Activated CD4-positive, alpha-beta memory T cell treated with anti-CD3 and anti-CD28 coated beads for 36 hours (primary cell): ENCODE measurements at regions of chr5 and their contacts with region 1.

Region 1: GRCh38 chr5:143679777-143680176 is 132.2 kb upstream of the HMHB1 start:
- DNase-seq: no peak
- H3K4me3 Mint-ChIP-seq: no peak overlapping the region
- H3K27ac Mint-ChIP-seq: no peak overlapping the region
- H3K4me1 Mint-ChIP-seq: peaks cover 23% of the 10 kb centered on the region
- H3K27me3 Mint-ChIP-seq: peaks cover under 1% of the 10 kb centered on the region

Region 2: DNA sequence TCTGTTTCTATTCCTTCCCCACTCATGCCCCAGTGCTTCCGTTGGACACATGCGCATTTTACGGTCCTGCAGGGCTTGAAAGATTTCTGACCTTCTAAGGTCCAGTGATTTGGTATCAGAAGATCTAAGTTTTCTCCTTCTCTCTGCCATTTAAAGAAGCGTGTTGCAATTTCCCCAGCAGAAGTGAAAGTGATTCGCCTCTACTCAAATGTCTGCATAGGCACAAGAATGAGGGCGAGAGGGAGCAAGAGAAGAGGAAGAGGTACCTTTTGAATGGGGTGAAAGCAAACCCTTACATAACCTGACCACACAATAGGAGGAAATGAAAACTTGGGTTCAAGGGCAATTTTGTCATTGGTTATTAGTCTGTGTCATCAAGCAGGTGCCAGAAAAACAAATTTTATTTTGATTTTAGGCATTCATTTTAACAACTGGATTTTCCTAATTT is 244.5 kb before region 1 on chr5:
- CTCF ChIA-PET with region 1: no interaction called
- POLR2A ChIA-PET with region 1: no interaction called
- intact Hi-C with region 1: loop called (anchors 1 kb)
- DNase-seq: peak; percentile 51
- H3K4me3 Mint-ChIP-seq: peak overlapping the region; percentile 81
- H3K27ac Mint-ChIP-seq: peak overlapping the region; percentile 87
- H3K4me1 Mint-ChIP-seq: peaks cover 68% of the 10 kb centered on the region
- H3K27me3 Mint-ChIP-seq: no peaks in the 10 kb centered on the region

Region 3: DNA sequence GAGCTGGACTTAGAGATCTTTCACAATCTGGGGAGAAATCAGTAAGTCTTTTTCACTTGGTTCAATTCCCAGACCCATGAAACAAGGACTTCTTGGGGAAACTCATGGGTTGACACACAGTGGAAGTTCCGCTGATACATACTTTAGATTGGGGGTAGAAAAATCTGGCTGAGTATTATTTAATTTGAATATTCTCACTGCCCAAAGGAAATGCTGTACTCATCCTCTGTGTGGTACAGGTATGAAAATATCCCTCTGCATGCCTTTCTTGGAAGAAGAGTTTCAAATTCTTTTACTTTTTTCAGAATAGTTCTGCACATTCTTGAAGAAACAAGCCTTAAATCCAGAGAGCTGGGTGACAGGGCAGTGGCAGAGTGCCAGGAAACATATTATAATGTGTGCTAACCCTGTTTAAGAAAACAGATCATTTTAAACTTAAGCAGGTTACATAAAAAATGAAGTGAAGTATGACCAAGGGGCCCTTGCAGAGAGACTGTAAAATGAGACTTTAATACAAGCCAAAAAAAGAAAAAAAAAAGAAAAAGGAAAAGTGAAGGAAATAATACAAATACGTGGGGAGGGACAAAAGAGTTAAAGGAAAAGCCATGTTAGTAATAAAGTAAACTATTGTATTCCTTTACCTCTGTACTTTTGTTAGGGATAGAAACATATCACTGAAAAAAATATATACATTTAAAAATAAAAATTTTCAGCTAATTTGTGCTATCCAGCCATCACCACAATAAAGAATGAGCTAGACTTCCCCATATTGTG is 102.9 kb before region 1 on chr5:
- CTCF ChIA-PET with region 1: no interaction called
- POLR2A ChIA-PET with region 1: no interaction called
- intact Hi-C with region 1: no loop called
- DNase-seq: no peak
- H3K4me3 Mint-ChIP-seq: no peak overlapping the region
- H3K27ac Mint-ChIP-seq: no peak overlapping the region
- H3K4me1 Mint-ChIP-seq: peaks cover 3% of the 10 kb centered on the region
- H3K27me3 Mint-ChIP-seq: no peaks in the 10 kb centered on the region

Region 4: DNA sequence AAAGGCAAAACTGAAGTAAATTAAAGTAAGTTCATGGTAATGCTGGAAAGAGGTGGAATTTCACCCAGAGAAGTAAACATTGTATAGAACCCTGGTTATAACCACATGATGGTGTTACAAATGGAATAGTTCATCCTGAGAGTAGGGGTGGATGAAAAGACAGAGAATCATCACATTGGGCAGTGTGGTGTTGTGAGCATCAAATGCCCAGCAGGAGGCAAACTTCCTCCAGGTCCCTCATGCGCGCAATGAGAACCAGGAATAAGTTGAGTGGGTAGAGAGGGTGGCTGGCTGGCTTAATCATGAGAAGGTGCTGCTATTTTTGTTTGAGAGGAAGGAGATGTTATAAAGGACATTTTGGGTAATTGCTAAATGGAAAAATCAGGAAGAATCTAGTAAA is 31.1 kb before region 1 on chr5:
- CTCF ChIA-PET with region 1: interaction called, 3 read pairs
- POLR2A ChIA-PET with region 1: no interaction called
- intact Hi-C with region 1: loop called (anchors 1 kb)
- DNase-seq: peak; percentile 21
- H3K4me3 Mint-ChIP-seq: no peak overlapping the region
- H3K27ac Mint-ChIP-seq: no peak overlapping the region
- H3K4me1 Mint-ChIP-seq: peaks cover 18% of the 10 kb centered on the region
- H3K27me3 Mint-ChIP-seq: peaks cover 3% of the 10 kb centered on the region

Region 5: DNA sequence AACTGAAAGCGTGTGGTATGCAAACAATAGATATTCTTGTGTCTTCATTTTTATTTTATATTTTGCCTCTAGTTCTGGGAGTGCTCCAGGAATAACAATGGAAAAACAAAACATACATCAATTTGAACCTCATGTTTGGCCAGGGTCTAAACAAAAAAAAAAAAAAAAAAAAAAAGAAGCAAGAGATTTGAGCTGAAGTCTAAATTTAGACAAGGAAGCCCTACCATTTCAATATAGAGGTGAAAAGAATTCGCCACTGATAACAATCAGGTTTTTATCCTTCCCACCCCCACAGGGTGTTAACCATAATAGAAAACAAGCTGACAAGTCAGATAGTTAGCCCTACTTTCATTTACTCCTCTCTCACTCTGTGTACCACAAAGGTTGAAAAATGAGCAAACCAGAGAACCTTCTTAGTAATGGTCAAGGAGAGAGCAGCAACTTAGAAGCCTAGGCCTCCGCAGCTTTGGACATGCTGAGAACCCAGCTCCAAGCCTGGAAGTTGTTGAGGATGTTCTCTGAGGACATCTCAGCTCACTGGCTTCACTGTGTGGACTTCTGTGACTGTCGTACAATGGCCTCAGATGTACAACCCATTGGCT is 14.0 kb after region 1 on chr5:
- CTCF ChIA-PET with region 1: interaction called, 4 read pairs
- POLR2A ChIA-PET with region 1: interaction called, 3 read pairs
- intact Hi-C with region 1: loop called (anchors 1 kb)
- DNase-seq: peak; percentile 22
- H3K4me3 Mint-ChIP-seq: no peak overlapping the region
- H3K27ac Mint-ChIP-seq: no peak overlapping the region
- H3K4me1 Mint-ChIP-seq: peaks cover 21% of the 10 kb centered on the region
- H3K27me3 Mint-ChIP-seq: peaks cover 4% of the 10 kb centered on the region

Region 6: GRCh38 chr5:143886651-143887638 is 207.2 kb after region 1 on chr5:
- CTCF ChIA-PET with region 1: no interaction called
- POLR2A ChIA-PET with region 1: no interaction called
- intact Hi-C with region 1: no loop called
- DNase-seq: no peak
- H3K4me3 Mint-ChIP-seq: no peak overlapping the region
- H3K27ac Mint-ChIP-seq: no peak overlapping the region
- H3K4me1 Mint-ChIP-seq: no peaks in the 10 kb centered on the region
- H3K27me3 Mint-ChIP-seq: peaks cover 2% of the 10 kb centered on the region